ENCODE measurements at regions of chr6 and their contacts with region 1.

Region 1: DNA sequence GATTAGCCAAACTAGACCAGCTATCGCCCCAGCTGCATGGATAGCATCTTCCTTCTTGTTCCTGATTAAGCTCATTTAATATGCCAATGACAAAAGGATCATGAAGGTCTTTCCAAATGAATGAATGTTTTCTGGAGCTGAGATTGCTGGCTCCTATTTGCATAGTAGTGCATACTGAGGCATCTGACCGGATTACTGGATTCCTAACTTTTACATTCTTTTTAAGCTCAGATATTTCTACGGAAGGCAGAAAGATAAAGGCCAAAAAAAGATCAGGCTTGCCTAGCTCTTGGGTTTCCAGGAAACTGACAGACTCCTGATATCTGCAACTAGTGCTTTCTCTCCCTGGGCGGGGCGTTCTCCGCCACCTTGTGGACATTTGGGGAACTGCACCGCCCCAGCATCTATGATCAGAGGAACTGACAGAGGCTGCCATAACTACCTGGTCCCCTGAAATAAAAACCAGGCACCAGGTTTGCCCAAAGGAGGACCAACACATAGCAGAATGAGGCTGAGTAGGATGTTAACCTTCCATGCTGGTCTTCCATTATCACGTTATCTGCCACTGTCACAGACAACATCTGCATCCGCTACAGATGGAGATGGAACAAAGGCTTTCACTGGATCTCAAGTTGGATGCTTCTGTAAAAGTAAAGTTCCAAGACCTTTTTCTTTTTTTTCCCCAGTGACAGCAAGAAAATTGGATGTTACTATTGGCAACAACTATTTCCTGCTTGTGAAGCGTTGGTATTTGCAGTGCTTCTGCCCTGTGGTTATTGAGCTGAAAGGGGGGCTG is 33.2 kb downstream of the NT5E start:
- DNase-seq: peak; percentile 83
- H3K4me3 Mint-ChIP-seq: no peak overlapping the region
- H3K27ac Mint-ChIP-seq: no peak overlapping the region
- H3K4me1 Mint-ChIP-seq: peaks cover 8% of the 10 kb centered on the region
- H3K27me3 Mint-ChIP-seq: no peaks in the 10 kb centered on the region

Region 2: DNA sequence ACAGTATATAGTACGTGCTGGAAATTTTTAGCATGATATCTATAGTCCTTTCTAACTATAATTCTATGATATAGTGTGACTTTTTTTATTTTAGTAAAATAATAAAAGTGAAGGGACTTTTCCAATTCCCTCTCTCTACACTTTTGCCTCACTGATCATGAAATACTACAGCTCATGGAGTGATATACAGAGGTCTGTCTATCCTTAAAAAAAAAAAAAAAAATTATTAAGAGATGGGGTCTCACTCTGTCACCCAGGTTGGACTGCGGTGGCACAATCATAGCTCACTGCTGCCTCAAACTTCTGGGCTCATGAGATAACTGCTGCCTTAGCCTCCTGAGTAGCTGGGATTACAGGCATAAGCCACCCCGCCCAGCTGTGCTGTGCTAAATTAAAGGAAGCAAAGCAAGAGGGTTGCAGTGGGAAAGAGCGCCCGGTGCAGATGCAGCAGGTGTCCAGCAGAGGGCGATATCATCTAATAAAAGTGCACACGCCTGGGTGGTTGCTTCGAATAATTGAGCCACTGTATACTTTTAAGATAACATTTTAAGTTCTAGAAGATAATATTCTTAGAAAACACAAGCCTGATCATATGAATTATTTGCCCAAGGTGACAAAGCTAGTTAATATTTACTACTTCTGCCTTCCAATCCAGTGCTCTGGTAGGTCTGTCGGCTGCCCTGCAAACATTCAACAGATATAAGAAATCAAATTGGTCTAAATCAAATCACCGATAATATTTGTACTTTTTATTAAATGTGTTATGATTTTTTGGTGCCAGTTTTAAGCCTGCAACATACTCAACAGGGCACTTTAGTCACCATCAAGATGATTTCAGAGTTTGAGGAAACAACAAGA is 128.1 kb before region 1 on chr6:
- CTCF ChIA-PET with region 1: interaction called, 71 read pairs
- POLR2A ChIA-PET with region 1: interaction called, 3 read pairs
- DNase-seq: peak; percentile 60
- H3K4me3 Mint-ChIP-seq: no peak overlapping the region
- H3K27ac Mint-ChIP-seq: no peak overlapping the region
- H3K4me1 Mint-ChIP-seq: no peaks in the 10 kb centered on the region
- H3K27me3 Mint-ChIP-seq: peaks cover 2% of the 10 kb centered on the region

Region 3: DNA sequence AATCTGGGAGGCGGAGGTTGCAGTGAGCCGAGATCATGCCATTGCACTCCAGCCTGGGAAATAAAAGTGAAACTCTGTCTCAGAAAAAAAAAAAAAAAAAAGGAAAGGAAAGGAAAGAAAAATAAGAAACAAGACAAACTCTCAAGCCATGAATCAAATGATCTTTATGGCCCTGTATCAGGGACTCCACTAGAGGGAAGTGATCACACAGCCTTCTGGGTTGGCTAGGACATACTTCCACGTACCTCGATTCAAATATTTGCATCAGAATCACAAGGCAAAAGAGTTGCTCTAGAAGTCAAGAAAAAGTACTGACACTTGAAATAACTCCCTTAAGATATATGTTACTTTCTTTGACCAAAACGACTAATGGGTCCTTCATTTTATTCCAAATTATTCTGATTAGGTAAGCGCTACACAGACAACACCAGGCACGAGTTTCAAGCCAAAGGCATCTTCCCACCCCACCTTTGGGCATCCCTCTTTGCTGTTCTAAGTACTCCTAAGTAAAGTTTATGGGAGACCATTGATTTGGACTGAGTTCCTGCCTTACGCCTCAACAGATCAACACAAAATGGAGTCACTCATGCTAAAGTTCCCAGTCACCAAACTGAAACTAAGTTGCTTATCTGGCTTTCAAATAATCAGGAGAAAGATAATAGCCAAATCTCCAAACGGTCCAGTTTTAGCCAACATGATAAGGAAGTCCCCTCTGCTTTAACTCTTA is 110.8 kb before region 1 on chr6:
- CTCF ChIA-PET with region 1: interaction called, 10 read pairs
- POLR2A ChIA-PET with region 1: no interaction called
- DNase-seq: no peak
- H3K4me3 Mint-ChIP-seq: no peak overlapping the region
- H3K27ac Mint-ChIP-seq: no peak overlapping the region
- H3K4me1 Mint-ChIP-seq: no peaks in the 10 kb centered on the region
- H3K27me3 Mint-ChIP-seq: peaks cover 8% of the 10 kb centered on the region

Region 4: GRCh38 chr6:85421997-85422401 is 61.1 kb before region 1 on chr6:
- CTCF ChIA-PET with region 1: no interaction called
- POLR2A ChIA-PET with region 1: no interaction called
- DNase-seq: no peak
- H3K4me3 Mint-ChIP-seq: no peak overlapping the region
- H3K27ac Mint-ChIP-seq: no peak overlapping the region
- H3K4me1 Mint-ChIP-seq: no peaks in the 10 kb centered on the region
- H3K27me3 Mint-ChIP-seq: peaks cover 14% of the 10 kb centered on the region

Region 5: GRCh38 chr6:85449818-85450759 is 33.0 kb before region 1 on chr6 and contains the start of gene NT5E:
- CTCF ChIA-PET with region 1: interaction called, 41 read pairs
- POLR2A ChIA-PET with region 1: interaction called, 4 read pairs
- DNase-seq: peak; percentile 55
- H3K4me3 Mint-ChIP-seq: peak within 1 kb of the TSS; percentile 76
- H3K27ac Mint-ChIP-seq: peak within 1 kb of the TSS; percentile 31
- H3K4me1 Mint-ChIP-seq: peaks cover 26% of the 10 kb centered on the region
- H3K27me3 Mint-ChIP-seq: peaks cover 60% of the 10 kb centered on the region
- total RNA-seq, gene NT5E: 2.4 to 3.4 TPM

Region 6: GRCh38 chr6:85468261-85468660 is 14.8 kb before region 1 on chr6:
- CTCF ChIA-PET with region 1: interaction called, 35 read pairs
- POLR2A ChIA-PET with region 1: interaction called, 3 read pairs
- DNase-seq: no peak
- H3K4me3 Mint-ChIP-seq: no peak overlapping the region
- H3K27ac Mint-ChIP-seq: no peak overlapping the region
- H3K4me1 Mint-ChIP-seq: peaks cover 28% of the 10 kb centered on the region
- H3K27me3 Mint-ChIP-seq: peaks cover 6% of the 10 kb centered on the region

Region 7: GRCh38 chr6:85537055-85537494 is 54.0 kb after region 1 on chr6:
- CTCF ChIA-PET with region 1: interaction called, 10 read pairs
- POLR2A ChIA-PET with region 1: no interaction called
- DNase-seq: no peak
- H3K4me3 Mint-ChIP-seq: no peak overlapping the region
- H3K27ac Mint-ChIP-seq: no peak overlapping the region
- H3K4me1 Mint-ChIP-seq: no peaks in the 10 kb centered on the region
- H3K27me3 Mint-ChIP-seq: no peaks in the 10 kb centered on the region

Region 8: GRCh38 chr6:85983032-85983659 is 500.0 kb after region 1 on chr6:
- CTCF ChIA-PET with region 1: no interaction called
- POLR2A ChIA-PET with region 1: no interaction called
- DNase-seq: no peak
- H3K4me3 Mint-ChIP-seq: no peak overlapping the region
- H3K27ac Mint-ChIP-seq: no peak overlapping the region
- H3K4me1 Mint-ChIP-seq: no peaks in the 10 kb centered on the region
- H3K27me3 Mint-ChIP-seq: no peaks in the 10 kb centered on the region

Measured in activated CD4-positive, alpha-beta memory T cell treated with anti-CD3 and anti-CD28 coated beads, Interleukin-2, amount 10 ng/mL, durations not matched to agents 7 days and 5 days (primary cell).